A549 (cell line): ENCODE measurements at regions of chr17 and their contacts with region 1.

Region 1: GRCh38 chr17:27332485-27333409 is 38.8 kb downstream of the WSB1 start:
- DNase-seq: peak; percentile 97 to 99
- ATAC-seq: peak; percentile 94 to 98
- H3K4me3 ChIP-seq: peak overlapping the region; percentile 47
- H3K27ac ChIP-seq: peak overlapping the region; percentile 87 to 91
- H3K4me1 ChIP-seq: peaks cover 24% of the 10 kb centered on the region
- CTCF ChIP-seq: peak; percentile 96
- EP300 ChIP-seq: peak; percentile 33 to 51; a peak in 3 of 5 replicates
- POLR2A ChIP-seq: peak; percentile 16; the same call in 1 of the 2 replicates
- RAD21 ChIP-seq: peak; percentile 95 to 100

Region 2: GRCh38 chr17:27226615-27227230 is 106.0 kb before region 1 on chr17:
- CTCF ChIA-PET with region 1: interaction called, 11 read pairs
- POLR2A ChIA-PET with region 1: no interaction called
- DNase-seq: peak in 1 of 2 experiments; percentile 73
- ATAC-seq: peak; percentile 88 to 98
- H3K4me3 ChIP-seq: no peak overlapping the region
- H3K27ac ChIP-seq: peak overlapping the region; percentile 43 to 48; a peak in 4 of 6 replicates
- H3K4me1 ChIP-seq: peaks cover 20% of the 10 kb centered on the region
- CTCF ChIP-seq: no peak
- EP300 ChIP-seq: no peak
- POLR2A ChIP-seq: no peak
- RAD21 ChIP-seq: no peak

Region 3: DNA sequence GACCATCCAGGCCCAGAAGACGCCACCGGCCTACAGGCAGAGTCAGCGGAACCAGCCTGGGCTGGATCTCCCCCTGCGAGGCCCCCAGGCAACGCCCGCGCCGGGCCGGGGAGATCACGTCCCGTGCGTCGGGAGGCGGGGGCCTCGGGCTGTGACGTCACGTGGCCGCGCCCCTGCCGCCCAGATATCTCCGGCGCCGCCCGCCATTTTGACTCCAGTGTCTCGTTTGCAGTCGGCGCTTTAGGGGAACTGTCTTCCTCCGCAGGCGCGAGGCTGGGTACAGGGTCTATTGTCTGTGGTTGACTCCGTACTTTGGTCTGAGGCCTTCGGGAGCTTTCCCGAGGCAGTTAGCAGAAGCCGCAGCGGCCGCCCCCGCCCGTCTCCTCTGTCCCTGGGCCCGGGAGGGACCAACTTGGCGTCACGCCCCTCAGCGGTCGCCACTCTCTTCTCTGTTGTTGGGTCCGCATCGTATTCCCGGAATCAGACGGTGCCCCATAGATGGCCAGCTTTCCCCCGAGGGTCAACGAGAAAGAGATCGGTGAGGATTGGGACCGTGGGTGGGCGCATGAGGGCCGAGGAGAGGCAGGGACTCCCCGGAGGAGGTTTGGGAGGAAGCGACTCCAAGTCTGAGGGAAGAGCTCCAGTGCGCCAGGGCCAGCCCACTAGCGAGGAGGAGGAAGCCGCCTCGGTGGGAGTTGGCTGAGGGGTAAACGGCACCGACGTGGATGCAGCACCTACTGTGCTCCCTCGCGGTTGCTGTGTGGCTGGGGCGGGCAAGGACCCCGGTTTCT is 38.7 kb before region 1 on chr17 and contains the start of gene WSB1:
- CTCF ChIA-PET with region 1: interaction called, 18 read pairs
- POLR2A ChIA-PET with region 1: interaction called, 40 read pairs
- DNase-seq: peak; percentile 92 to 94
- ATAC-seq: peak; percentile 87 to 89
- H3K4me3 ChIP-seq: peak within 1 kb of the TSS; percentile 71
- H3K27ac ChIP-seq: peak within 1 kb of the TSS; percentile 88 to 94
- H3K4me1 ChIP-seq: peaks cover 25% of the 10 kb centered on the region
- CTCF ChIP-seq: no peak
- EP300 ChIP-seq: no peak
- POLR2A ChIP-seq: peak; percentile 98
- RAD21 ChIP-seq: peak in 1 of 2 experiments; percentile 18; a peak in 1 of 5 replicates
- polyA plus RNA-seq, gene WSB1: 107 and 111 TPM in 2 replicates

Region 4: DNA sequence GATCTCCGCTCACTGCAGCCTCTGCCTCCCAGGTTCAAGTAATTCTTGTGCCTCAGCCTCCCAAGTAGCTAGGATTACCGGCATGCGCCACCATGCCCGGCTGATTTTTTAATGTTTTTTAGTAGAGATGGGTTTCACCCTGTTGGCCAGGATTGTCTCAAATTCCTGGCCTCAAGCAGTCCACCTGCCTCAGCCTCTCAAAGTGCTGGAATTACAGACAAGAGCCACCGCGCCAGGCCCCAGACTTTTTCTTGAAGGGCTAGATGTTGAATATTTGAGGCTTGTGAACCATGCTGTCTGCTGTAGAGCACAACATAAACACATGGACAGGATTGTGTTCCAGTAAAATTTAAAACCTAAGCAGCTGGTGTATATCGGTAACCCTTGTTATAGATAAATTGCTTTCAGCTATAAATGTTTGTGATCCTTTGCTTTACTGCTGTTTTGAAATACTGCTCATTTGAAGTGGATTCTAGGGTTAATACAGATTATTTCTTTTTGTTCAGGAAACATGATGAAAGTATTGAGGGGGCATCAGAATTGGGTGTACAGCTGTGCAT is 26.4 kb before region 1 on chr17:
- CTCF ChIA-PET with region 1: interaction called, 23 read pairs
- POLR2A ChIA-PET with region 1: no interaction called
- DNase-seq: no peak
- ATAC-seq: no peak
- H3K4me3 ChIP-seq: no peak overlapping the region
- H3K27ac ChIP-seq: no peak overlapping the region
- H3K4me1 ChIP-seq: peaks cover 23% of the 10 kb centered on the region
- CTCF ChIP-seq: no peak
- EP300 ChIP-seq: no peak
- POLR2A ChIP-seq: no peak
- RAD21 ChIP-seq: no peak

Region 5: DNA sequence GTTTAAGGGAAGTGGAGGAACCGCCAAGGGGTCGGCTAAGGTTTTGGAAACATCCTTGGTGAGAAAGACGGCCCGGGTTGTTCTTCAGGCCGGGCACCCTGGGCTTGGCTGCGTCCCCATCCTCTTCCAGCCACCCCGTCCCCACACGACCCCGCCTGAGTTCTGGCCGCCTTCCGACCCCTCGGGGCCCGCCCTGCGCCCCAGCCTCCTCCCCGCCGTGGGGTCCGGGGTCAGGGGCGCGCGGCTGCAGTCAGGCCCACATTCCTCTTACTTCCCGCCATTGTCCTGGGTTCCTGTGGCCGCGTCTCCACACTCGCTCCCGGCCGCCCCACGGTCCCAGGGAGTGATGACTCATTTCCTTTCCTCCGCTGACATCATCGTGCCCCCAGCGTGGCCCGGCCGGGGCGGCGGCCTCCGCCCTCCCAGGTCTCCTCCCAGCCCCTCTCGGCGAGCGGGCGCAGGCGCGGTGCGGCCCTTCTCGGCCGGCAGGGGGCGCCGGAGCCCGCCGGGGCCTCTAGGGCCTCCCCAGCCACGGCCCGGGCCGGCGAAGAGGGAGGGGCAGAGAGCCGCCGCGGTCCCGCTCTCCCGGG is 20.8 kb after region 1 on chr17:
- CTCF ChIA-PET with region 1: interaction called, 31 read pairs
- POLR2A ChIA-PET with region 1: interaction called, 7 read pairs
- DNase-seq: peak; percentile 96 to 97
- ATAC-seq: peak; percentile 85 to 93
- H3K4me3 ChIP-seq: peak overlapping the region; percentile 59
- H3K27ac ChIP-seq: peak overlapping the region; percentile 90 to 99
- H3K4me1 ChIP-seq: peaks cover 25% of the 10 kb centered on the region
- CTCF ChIP-seq: peak; percentile 99
- EP300 ChIP-seq: peak; percentile 49 to 64; a peak in 2 of 5 replicates
- POLR2A ChIP-seq: peak; percentile 81
- RAD21 ChIP-seq: peak; percentile 67 to 99

Region 6: DNA sequence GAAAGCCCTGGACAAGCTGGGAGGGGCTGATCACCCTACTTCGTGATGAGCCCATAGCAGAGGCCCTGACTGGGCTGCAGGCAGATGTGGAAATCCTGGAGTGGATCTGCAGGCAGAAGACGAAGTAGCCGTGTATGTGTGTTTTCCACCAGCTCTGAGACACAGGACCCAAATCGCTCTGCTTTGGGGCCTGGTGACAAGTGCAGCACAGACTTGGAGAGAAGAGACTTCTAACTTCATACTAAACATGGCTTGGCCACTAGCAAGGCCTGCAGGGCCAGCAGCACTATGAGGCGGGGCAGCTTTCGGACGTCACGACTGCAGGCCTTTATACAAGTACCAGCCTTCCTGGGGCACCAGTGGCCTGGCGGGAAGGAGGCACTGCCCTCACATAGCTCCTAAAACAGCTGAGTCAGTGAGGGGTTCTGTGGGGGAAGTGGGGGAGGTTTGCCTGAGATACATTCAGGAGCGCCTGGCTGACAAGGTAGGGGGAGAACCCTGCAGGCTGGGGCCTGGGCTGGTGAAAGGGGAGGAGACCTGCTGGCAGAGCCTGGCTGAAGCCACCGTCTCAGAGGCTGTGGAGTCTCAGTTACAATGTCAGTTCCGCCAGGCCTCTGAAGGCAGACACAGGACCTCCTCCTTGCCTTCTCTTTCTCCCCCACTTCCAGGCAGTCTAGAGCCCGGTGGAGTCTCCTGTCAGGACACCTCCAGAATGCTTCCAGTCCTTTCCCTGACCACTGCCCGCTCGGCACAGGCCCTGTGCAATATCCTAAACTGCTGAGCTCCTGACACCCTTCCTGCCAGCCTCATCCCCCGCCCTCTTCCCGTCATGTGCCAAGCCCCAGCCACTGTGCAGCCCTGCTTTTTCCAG is 34.6 kb after region 1 on chr17:
- CTCF ChIA-PET with region 1: no interaction called
- POLR2A ChIA-PET with region 1: no interaction called
- DNase-seq: no peak
- ATAC-seq: peak in 1 of 2 experiments; percentile 19; a peak in 1 of 6 replicates
- H3K4me3 ChIP-seq: no peak overlapping the region
- H3K27ac ChIP-seq: peak overlapping the region in 1 of 2 experiments; percentile 33; a peak in 1 of 6 replicates
- H3K4me1 ChIP-seq: peaks cover 11% of the 10 kb centered on the region; the same call in 2 of the 3 replicates
- CTCF ChIP-seq: no peak
- EP300 ChIP-seq: no peak
- POLR2A ChIP-seq: no peak
- RAD21 ChIP-seq: no peak

Region 7: GRCh38 chr17:27413792-27414191 is 81.0 kb after region 1 on chr17:
- CTCF ChIA-PET with region 1: no interaction called
- POLR2A ChIA-PET with region 1: no interaction called
- DNase-seq: no peak
- ATAC-seq: no peak
- H3K4me3 ChIP-seq: no peak overlapping the region
- H3K27ac ChIP-seq: no peak overlapping the region
- H3K4me1 ChIP-seq: peaks cover 22% of the 10 kb centered on the region
- CTCF ChIP-seq: no peak
- EP300 ChIP-seq: no peak
- POLR2A ChIP-seq: no peak
- RAD21 ChIP-seq: no peak